ENCODE measurements at regions of chr20 and their contacts with region 1.

Region 1: GRCh38 chr20:56422076-56422823 is 10.2 kb downstream of the CASS4 start:
- DNase-seq: no peak
- CTCF ChIP-seq: no peak

Region 2: DNA sequence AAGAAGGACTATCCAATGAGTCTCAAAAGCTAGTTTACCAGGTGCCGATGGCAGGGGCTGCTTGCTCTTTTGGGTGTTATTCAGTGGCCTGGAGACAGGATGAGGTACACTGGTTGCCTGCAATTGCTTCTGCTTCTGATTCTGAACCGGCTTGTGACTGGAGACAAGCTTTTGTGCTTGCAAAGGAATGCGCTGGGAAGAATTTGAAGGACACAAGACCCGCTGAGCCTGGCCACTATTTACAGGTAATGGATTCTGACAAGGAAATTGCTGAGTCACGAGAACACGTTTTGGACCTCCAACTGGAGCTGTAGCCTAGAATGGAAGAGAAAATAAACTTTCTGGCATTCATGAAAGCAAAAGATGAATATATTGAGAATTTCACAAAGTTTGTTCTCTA is 36.0 kb before region 1 on chr20:
- CTCF ChIA-PET with region 1: no interaction called
- POLR2A ChIA-PET with region 1: no interaction called
- DNase-seq: no peak
- CTCF ChIP-seq: no peak

Region 3: GRCh38 chr20:56411759-56412472 is 10.3 kb before region 1 on chr20 and contains the start of gene CASS4:
- CTCF ChIA-PET with region 1: interaction called, 20 read pairs
- POLR2A ChIA-PET with region 1: no interaction called
- DNase-seq: peak; percentile 41
- CTCF ChIP-seq: no peak

Region 4: GRCh38 chr20:56443654-56444540 is 21.6 kb after region 1 on chr20:
- CTCF ChIA-PET with region 1: interaction called, 10 read pairs
- POLR2A ChIA-PET with region 1: no interaction called
- DNase-seq: no peak
- CTCF ChIP-seq: no peak

Measured in GM10248 (cell line).